PC-9 (cell line): ENCODE measurements at regions of chr22 and their contacts with region 1.

Region 1: GRCh38 chr22:42608823-42609361 is 5.8 kb downstream of the POLDIP3 start:
- DNase-seq: peak; percentile 25 to 48
- H3K4me3 ChIP-seq: no peak overlapping the region
- H3K27ac ChIP-seq: peak overlapping the region; percentile 31
- H3K4me1 ChIP-seq: peaks cover 28% of the 10 kb centered on the region
- H3K27me3 ChIP-seq: no peaks in the 10 kb centered on the region
- CTCF ChIP-seq: no peak

Region 2: DNA sequence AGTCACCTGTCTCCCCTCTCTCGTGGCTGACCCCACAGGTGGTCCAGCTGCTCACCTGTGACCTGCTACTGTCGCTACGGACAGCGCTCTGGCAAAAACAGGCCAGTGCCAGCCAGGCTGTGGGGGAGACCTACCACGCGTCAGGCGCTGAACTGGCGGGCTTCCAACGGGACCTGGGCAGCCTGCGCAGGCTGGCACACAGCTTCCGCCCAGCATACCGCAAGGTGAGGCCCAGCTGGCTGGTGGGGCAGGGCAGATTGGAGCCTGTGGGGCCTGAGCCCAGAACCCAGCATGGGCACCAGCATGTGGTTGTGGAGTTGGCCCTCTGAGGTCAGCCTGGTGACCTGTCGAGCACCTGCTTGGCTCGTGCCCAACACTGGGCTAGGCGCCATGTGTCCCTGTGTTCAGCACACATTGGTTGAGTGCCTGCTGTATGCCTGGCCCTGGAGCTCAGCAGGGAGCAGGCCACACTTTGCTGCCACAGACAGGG is 705.9 kb before region 1 on chr22:
- CTCF ChIA-PET with region 1: no interaction called
- POLR2A ChIA-PET with region 1: no interaction called
- intact Hi-C with region 1: no loop called
- DNase-seq: no peak
- H3K4me3 ChIP-seq: no peak overlapping the region
- H3K27ac ChIP-seq: no peak overlapping the region
- H3K4me1 ChIP-seq: no peaks in the 10 kb centered on the region
- H3K27me3 ChIP-seq: no peaks in the 10 kb centered on the region
- CTCF ChIP-seq: no peak

Region 3: GRCh38 chr22:41966607-41967240 is 642.2 kb before region 1 on chr22:
- CTCF ChIA-PET with region 1: no interaction called
- POLR2A ChIA-PET with region 1: no interaction called
- intact Hi-C with region 1: loop called (anchors 5 kb)
- DNase-seq: peak; percentile 59 to 80
- H3K4me3 ChIP-seq: no peak overlapping the region
- H3K27ac ChIP-seq: no peak overlapping the region
- H3K4me1 ChIP-seq: no peaks in the 10 kb centered on the region
- H3K27me3 ChIP-seq: peaks cover 8% of the 10 kb centered on the region; the same call in 1 of the 2 replicates
- CTCF ChIP-seq: peak; percentile 73

Region 4: GRCh38 chr22:42596336-42596735 is 12.6 kb before region 1 on chr22:
- CTCF ChIA-PET with region 1: interaction called, 11 read pairs
- POLR2A ChIA-PET with region 1: interaction called, 5 read pairs
- intact Hi-C with region 1: no loop called
- DNase-seq: no peak
- H3K4me3 ChIP-seq: no peak overlapping the region
- H3K27ac ChIP-seq: no peak overlapping the region
- H3K4me1 ChIP-seq: no peaks in the 10 kb centered on the region
- H3K27me3 ChIP-seq: no peaks in the 10 kb centered on the region
- CTCF ChIP-seq: no peak